Naive thymus-derived CD4-positive, alpha-beta T cell (primary cell): ENCODE measurements at regions of chr18 and their contacts with region 1.

Region 1: GRCh38 chr18:3454365-3455089 is 4.6 kb downstream of the TGIF1 start:
- DNase-seq: peak in 7 of 9 donors; percentile 40 to 64 (median 60)
- ATAC-seq: no peak
- H3K4me3 ChIP-seq: peak overlapping the region; percentile 48
- H3K4me3 Mint-ChIP-seq: peak overlapping the region; percentile 85 to 96 (median 94)
- H3K27ac ChIP-seq: peak overlapping the region; percentile 96
- H3K27ac Mint-ChIP-seq: peak overlapping the region; percentile 89 to 100 (median 99)
- H3K4me1 ChIP-seq: peaks cover 15 to 35% of the 10 kb centered on the region in 2 donors
- H3K4me1 Mint-ChIP-seq: peaks cover 22 to 70% (median 32%) of the 10 kb centered on the region in 7 donors
- H3K27me3 ChIP-seq: no peaks in the 10 kb centered on the region
- H3K27me3 Mint-ChIP-seq: no peaks in the 10 kb centered on the region

Region 2: DNA sequence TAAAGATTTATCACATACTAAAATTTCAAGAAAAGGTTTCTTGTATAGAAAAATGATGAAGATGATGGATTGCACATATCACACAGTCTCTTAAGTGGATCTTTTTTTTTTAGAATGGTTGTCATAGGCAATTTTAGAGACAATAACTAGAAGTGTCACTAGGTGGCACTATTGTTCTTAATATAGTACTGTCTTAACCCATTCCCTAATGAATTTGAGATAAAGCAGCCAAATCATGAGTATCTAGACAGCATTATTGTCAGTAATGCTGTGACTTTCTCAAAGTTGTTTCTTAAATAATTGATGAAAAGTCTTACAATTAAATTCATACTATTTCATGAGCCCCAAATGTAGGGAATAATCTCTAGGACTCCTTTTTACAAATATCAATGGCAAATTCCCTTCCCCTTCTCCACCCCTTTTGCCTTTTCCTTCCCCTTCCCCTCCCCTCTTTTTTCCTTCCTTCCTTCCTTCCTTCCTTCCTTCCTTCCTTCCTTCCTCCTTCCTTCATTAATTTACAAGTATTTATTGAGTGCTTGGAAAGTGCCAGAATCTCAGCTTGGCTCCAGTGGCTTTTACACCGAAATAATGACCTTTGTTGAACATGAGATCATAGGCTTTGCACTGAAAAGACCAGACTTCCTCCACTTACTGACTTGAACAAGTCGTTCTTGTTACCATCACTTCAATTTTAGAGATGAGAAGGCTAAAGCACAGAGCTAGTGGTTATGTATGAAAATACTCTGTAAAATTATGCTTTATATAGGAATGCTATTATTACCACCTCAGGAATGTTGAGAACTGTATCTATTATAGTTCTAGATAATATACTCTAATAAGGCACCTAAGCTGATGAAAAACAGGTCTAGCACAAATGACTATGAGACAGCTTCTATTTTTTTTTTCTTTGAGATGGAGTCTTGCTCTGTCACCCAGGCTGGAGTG is 172.8 kb before region 1 on chr18:
- CTCF ChIA-PET with region 1: interaction called, 23 read pairs
- POLR2A ChIA-PET with region 1: interaction called, 6 read pairs
- intact Hi-C with region 1: loop called (anchors 1 kb)
- DNase-seq: peak in 7 of 9 donors; percentile 51 to 77 (median 68)
- ATAC-seq: peak; percentile 93
- H3K4me3 ChIP-seq: no peak overlapping the region
- H3K4me3 Mint-ChIP-seq: no peak overlapping the region
- H3K27ac ChIP-seq: no peak overlapping the region
- H3K27ac Mint-ChIP-seq: no peak overlapping the region
- H3K4me1 ChIP-seq: no peaks in the 10 kb centered on the region
- H3K4me1 Mint-ChIP-seq: peaks cover 0 to 8% (median 0%) of the 10 kb centered on the region in 7 donors
- H3K27me3 ChIP-seq: no peaks in the 10 kb centered on the region
- H3K27me3 Mint-ChIP-seq: no peaks in the 10 kb centered on the region

Region 3: DNA sequence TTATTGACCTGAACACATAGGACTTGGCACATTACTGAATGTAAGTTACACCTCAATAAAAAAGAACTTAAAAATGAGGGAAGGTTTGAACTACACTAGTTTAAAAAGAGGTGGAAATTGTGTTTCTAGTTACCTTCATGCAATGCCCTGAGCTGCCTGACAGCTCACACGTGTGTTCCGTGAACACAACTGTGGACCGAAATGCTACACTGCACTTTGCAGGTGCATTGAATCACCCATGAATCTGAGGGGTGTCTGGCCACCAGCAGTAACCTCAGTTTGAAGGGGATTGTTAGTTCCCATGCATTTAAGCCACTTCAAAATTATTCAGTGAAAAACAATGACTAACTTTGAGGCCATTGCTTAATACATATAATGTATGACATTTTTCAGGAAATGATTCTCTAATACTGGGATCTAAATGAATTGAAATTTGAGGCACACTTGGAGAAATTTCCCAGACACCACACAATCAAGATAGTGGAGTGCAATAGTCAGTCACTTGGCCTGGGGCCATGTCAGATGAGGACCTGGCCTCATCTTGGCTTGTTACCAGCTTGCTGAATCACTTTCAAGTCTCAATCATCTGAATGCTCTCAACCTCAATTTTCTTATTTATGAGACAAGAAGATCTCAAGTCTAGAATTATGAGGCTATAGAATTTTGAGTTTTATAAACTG is 133.3 kb before region 1 on chr18:
- CTCF ChIA-PET with region 1: interaction called, 6 read pairs
- POLR2A ChIA-PET with region 1: no interaction called
- intact Hi-C with region 1: loop called (anchors 1 to 5 kb)
- DNase-seq: no peak
- ATAC-seq: no peak
- H3K4me3 ChIP-seq: no peak overlapping the region
- H3K4me3 Mint-ChIP-seq: no peak overlapping the region
- H3K27ac ChIP-seq: no peak overlapping the region
- H3K27ac Mint-ChIP-seq: no peak overlapping the region
- H3K4me1 ChIP-seq: no peaks in the 10 kb centered on the region
- H3K4me1 Mint-ChIP-seq: peaks cover 0 to 8% (median 0%) of the 10 kb centered on the region in 7 donors
- H3K27me3 ChIP-seq: no peaks in the 10 kb centered on the region
- H3K27me3 Mint-ChIP-seq: peaks cover 4 to 13% (median 6%) of the 10 kb centered on the region in 5 donors

Region 4: GRCh38 chr18:3441290-3441689 is 13.2 kb before region 1 on chr18:
- CTCF ChIA-PET with region 1: interaction called, 29 read pairs
- POLR2A ChIA-PET with region 1: interaction called, 28 read pairs
- intact Hi-C with region 1: loop called in 1 of 2 experiments (anchors 1 kb)
- DNase-seq: peak in 5 of 9 donors; percentile 15 to 30 (median 24)
- ATAC-seq: peak; percentile 65
- H3K4me3 ChIP-seq: no peak overlapping the region
- H3K4me3 Mint-ChIP-seq: no peak overlapping the region
- H3K27ac ChIP-seq: no peak overlapping the region
- H3K27ac Mint-ChIP-seq: peak overlapping the region in 1 of 9 donors; percentile 51
- H3K4me1 ChIP-seq: no peaks in the 10 kb centered on the region
- H3K4me1 Mint-ChIP-seq: peaks cover 0 to 6% (median 0%) of the 10 kb centered on the region in 7 donors
- H3K27me3 ChIP-seq: no peaks in the 10 kb centered on the region
- H3K27me3 Mint-ChIP-seq: peaks cover 0 to 26% (median 0%) of the 10 kb centered on the region in 5 donors

Region 5: GRCh38 chr18:3585656-3586509 is 131.4 kb after region 1 on chr18:
- CTCF ChIA-PET with region 1: interaction called, 10 read pairs
- POLR2A ChIA-PET with region 1: interaction called, 9 read pairs
- intact Hi-C with region 1: no loop called
- DNase-seq: peak in 8 of 9 donors; percentile 40 to 60 (median 48)
- ATAC-seq: peak; percentile 90
- H3K4me3 ChIP-seq: no peak overlapping the region
- H3K4me3 Mint-ChIP-seq: peak overlapping the region in 3 of 10 donors; percentile 4 to 34 (median 16)
- H3K27ac ChIP-seq: no peak overlapping the region
- H3K27ac Mint-ChIP-seq: peak overlapping the region in 7 of 9 donors; percentile 28 to 93 (median 65)
- H3K4me1 ChIP-seq: no peaks in the 10 kb centered on the region
- H3K4me1 Mint-ChIP-seq: peaks cover 0 to 29% (median 11%) of the 10 kb centered on the region in 7 donors
- H3K27me3 ChIP-seq: no peaks in the 10 kb centered on the region
- H3K27me3 Mint-ChIP-seq: no peaks in the 10 kb centered on the region